ENCODE measurements at regions of chr10 and their contacts with region 1.

Region 1: GRCh38 chr10:115355162-115355760 is 262.1 kb downstream of the ATRNL1 start:
- DNase-seq: no peak
- ATAC-seq: no peak
- H3K4me3 Mint-ChIP-seq: no peak overlapping the region
- H3K27ac Mint-ChIP-seq: no peak overlapping the region
- H3K4me1 Mint-ChIP-seq: no peaks in the 10 kb centered on the region
- H3K27me3 Mint-ChIP-seq: no peaks in the 10 kb centered on the region
- CTCF ChIP-seq: no peak

Region 2: DNA sequence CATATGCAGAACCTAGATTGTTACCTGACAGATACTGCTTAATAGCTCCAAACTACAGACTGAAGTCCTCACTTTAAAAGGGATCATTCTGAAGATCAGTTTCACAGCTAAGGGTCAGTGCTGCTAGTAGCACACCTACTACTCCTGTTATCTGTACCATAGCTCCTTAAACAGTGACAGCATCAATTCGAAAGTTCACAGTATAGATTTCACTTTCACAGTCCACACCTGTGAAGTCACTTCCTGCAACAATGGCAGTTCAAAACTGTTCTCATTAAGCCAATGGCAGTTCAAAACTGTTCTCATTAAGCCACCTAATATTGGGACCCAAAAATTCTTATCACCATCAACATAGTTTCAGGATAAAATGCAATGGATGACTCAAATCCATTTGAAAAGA is 544.3 kb before region 1 on chr10:
- CTCF ChIA-PET with region 1: no interaction called
- POLR2A ChIA-PET with region 1: no interaction called
- intact Hi-C with region 1: no loop called
- DNase-seq: no peak
- ATAC-seq: no peak
- H3K4me3 Mint-ChIP-seq: no peak overlapping the region
- H3K27ac Mint-ChIP-seq: no peak overlapping the region
- H3K4me1 Mint-ChIP-seq: peaks cover 9% of the 10 kb centered on the region
- H3K27me3 Mint-ChIP-seq: no peaks in the 10 kb centered on the region
- CTCF ChIP-seq: no peak

Region 3: DNA sequence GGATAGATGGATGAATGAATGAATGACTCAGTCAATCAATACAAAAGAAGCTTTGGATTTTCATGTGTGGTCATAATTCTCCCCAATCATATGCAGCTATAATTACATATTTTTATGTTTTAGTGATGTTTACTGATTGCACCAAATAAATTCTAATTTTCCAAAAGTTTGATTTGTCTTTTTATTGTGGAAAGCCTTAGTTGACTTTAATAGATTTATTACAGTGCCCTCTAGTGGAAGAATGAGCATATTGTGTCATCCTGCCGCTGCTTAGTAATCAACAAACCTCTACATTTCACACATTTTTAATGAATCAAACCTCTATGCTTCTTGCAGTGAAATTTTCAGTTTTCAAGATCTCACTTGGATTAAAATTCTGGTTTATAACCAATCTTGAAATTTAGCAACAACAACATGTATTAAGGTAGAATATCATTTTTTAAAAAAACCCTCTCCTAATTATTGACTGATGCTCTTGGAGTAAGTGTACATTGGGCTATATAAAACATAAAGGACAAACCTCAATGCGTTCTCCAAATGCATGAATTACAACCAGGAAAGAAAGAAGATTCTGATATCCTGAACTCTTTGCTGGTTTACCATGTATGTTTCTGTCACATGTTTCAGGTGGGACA is 1134.9 kb after region 1 on chr10:
- CTCF ChIA-PET with region 1: no interaction called
- POLR2A ChIA-PET with region 1: no interaction called
- intact Hi-C with region 1: loop called (anchors 10 kb)
- DNase-seq: no peak
- ATAC-seq: no peak
- H3K4me3 Mint-ChIP-seq: no peak overlapping the region
- H3K27ac Mint-ChIP-seq: no peak overlapping the region
- H3K4me1 Mint-ChIP-seq: no peaks in the 10 kb centered on the region
- H3K27me3 Mint-ChIP-seq: no peaks in the 10 kb centered on the region
- CTCF ChIP-seq: no peak

Measured in activated B cell treated with CpG ODN at 0.5 μM for 24 hours (primary cell).